ENCODE measurements at regions of chr15 and their contacts with region 1.

Region 1: DNA sequence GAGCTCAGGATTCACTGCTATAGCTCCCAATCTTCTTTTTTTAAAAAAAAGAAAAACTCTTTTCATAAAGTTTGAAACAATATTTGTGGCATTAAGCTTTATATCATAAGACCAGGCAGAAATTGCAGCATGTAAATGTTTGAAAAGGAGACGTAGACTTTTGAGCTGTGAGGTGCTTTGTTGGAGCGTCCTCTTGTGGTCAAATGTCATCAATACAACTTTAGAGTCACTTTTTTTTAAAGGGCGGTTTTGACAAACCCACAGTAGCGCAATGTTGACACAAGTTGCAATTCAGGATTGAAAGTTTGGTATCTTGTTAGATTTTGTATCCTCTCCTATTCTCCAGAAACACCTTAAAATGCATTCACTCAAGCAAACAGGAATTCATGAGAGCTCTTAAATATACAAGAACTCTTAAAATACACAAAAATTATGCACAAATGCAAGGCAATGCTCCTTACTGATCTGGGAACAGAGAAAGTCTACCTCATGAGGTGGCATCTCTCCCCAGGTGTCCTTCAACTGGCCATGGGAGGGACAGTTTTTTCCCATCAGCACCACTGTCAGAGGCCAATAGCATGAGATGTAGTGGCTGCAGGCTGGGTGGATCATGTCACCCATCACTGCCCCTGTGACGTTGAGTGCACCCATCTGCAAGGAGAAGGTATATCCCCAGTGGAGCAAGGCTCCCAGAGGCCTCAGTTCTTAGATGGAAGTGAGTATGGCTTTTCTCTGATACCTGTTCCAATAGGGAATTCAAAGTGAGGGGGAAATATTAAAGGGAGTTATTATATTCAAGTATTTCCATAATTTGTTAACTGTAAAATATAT is 70.7 kb downstream of the ANXA2 start:
- DNase-seq: peak; percentile 13
- H3K4me3 Mint-ChIP-seq: no peak overlapping the region
- H3K27ac Mint-ChIP-seq: no peak overlapping the region
- H3K4me1 Mint-ChIP-seq: peaks cover 7% of the 10 kb centered on the region
- H3K27me3 Mint-ChIP-seq: peaks cover 56% of the 10 kb centered on the region

Region 2: DNA sequence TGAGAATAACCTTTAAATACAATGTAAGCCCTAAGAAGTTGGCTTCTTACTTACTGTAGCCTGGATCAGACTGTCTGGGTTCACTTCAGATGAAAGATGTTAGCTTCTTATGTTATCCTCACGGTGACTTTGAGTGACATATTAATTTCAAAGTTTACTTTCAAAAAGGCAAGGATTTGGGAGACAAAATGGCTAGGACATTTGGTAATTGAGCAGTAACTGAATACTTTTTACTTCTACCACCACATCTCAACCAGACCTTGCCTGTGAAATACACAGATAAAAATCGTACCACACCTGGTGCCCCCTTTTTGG is 601.9 kb before region 1 on chr15:
- intact Hi-C with region 1: loop called (anchors 1 kb)
- DNase-seq: no peak
- H3K4me3 Mint-ChIP-seq: no peak overlapping the region
- H3K27ac Mint-ChIP-seq: no peak overlapping the region
- H3K4me1 Mint-ChIP-seq: no peaks in the 10 kb centered on the region
- H3K27me3 Mint-ChIP-seq: peaks cover 20% of the 10 kb centered on the region

Region 3: DNA sequence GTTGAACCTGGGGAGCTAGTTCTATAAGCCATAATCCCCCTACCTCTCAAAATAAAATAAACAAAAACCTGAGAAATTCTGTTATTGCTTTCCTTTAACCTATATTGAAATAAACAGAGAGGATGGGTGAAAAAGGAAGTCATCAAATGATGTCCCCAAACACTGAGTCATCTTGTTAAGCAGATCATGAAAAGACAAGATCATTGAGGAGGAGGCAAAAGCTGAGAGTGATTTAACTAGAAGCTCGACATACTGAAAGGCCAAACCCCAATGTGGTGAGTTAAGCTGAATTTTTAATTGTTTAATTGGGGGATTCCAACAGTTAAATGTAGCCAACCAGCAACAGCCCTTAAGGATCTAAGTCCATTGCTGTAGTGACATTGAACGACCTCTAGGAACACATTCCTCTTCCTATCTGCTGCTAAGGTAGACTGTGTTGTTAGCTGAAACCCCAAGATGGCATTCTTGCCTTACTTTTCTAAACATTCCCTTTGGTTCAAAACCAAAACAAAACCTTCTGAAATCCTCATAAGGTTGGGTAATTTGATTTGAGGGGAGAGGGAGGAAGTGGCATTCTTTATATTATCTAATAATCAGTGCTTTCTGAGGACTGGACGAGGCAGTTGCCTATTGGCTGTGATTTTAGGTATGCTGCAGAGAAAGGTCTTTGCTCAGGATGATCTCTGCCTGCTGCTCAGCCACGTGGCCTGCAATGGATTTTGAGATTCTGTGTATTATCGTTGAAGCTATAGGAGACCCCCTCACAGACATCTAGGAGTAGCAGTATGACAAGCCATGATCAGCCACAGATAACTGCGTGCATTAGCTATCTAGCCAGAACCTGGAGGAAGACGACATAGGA is 575.3 kb before region 1 on chr15:
- intact Hi-C with region 1: no loop called
- DNase-seq: no peak
- H3K4me3 Mint-ChIP-seq: no peak overlapping the region
- H3K27ac Mint-ChIP-seq: no peak overlapping the region
- H3K4me1 Mint-ChIP-seq: peaks cover 5% of the 10 kb centered on the region
- H3K27me3 Mint-ChIP-seq: peaks cover 12% of the 10 kb centered on the region

Region 4: GRCh38 chr15:59997070-59997701 is 329.9 kb before region 1 on chr15:
- intact Hi-C with region 1: loop called (anchors 2 kb)
- DNase-seq: peak; percentile 63
- H3K4me3 Mint-ChIP-seq: peak overlapping the region; percentile 79
- H3K27ac Mint-ChIP-seq: peak overlapping the region; percentile 27
- H3K4me1 Mint-ChIP-seq: peaks cover 73% of the 10 kb centered on the region
- H3K27me3 Mint-ChIP-seq: peaks cover 86% of the 10 kb centered on the region

Region 5: GRCh38 chr15:60128000-60128376 is 199.1 kb before region 1 on chr15:
- intact Hi-C with region 1: no loop called
- DNase-seq: no peak
- H3K4me3 Mint-ChIP-seq: peak overlapping the region; percentile 82
- H3K27ac Mint-ChIP-seq: peak overlapping the region; percentile 80
- H3K4me1 Mint-ChIP-seq: peaks cover 57% of the 10 kb centered on the region
- H3K27me3 Mint-ChIP-seq: peaks cover 11% of the 10 kb centered on the region

Region 6: DNA sequence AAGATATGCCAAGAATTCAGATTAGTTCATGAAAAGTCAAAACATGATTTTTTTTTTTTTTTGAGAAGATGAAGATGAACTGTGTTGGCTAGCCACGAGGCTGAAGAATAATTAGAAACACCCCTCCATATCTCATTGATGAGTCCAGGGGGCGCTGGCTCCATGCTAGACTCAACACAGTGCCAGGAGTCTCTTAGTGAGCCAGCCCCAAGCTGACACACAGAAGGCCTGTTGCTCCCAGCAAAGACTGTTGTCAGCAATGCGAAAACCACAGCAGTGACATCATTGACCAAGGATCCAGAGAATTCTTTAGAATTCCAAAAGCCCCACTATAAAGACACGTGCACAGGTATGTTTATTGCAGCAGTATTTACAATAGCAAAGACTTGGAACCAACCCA is 114.5 kb before region 1 on chr15:
- intact Hi-C with region 1: loop called (anchors 10 kb)
- DNase-seq: no peak
- H3K4me3 Mint-ChIP-seq: no peak overlapping the region
- H3K27ac Mint-ChIP-seq: no peak overlapping the region
- H3K4me1 Mint-ChIP-seq: no peaks in the 10 kb centered on the region
- H3K27me3 Mint-ChIP-seq: peaks cover 36% of the 10 kb centered on the region

Region 7: DNA sequence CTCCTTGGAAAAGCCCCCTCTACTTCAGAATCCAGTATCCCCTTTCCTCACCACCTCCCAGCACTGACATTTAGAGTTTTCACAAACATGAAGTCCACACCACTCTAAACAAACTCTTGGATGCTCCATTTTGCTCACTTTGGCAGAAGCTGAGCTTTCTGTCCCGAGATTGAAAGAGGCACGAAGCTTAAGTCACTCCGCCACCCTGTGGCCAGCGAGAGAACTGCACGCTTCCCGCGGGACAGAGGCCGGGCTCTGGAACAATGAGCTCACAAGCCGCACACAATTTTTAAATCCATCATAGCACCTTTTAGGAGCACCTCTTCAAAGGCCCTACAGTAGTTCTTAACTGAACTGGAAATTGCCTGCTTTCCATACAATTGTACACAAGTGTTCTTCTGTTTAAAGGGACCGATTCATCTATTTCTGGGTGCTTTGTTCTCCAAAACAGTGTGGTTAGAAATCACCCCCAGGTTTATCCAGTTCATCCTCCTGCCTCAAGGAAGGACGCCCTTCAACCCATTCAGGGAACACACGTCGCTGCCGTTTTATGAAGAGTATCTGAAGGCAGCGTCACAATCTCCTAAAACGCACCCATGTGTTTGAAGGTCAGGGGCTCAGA is 1507.1 kb after region 1 on chr15:
- intact Hi-C with region 1: loop called (anchors 10 kb)
- DNase-seq: peak; percentile 59
- H3K4me3 Mint-ChIP-seq: no peak overlapping the region
- H3K27ac Mint-ChIP-seq: no peak overlapping the region
- H3K4me1 Mint-ChIP-seq: peaks cover 7% of the 10 kb centered on the region
- H3K27me3 Mint-ChIP-seq: peaks cover 16% of the 10 kb centered on the region

Measured in activated T-helper 1 cell treated with anti-CD3 and anti-CD28 coated beads, Interleukin-12 subunit alpha, Interleukin-12 subunit beta, Interleukin-2, Interleukin-4 antibody, amounts not matched to agents 30 ng/mL and 10 ng/mL and 1 ng/mL, durations not matched to agents 14 hours and 24 hours and 36 hours (primary cell).